Uterus (tissue), 4 donors: ENCODE measurements at regions of chr6 and their contacts with region 1.

Region 1: DNA sequence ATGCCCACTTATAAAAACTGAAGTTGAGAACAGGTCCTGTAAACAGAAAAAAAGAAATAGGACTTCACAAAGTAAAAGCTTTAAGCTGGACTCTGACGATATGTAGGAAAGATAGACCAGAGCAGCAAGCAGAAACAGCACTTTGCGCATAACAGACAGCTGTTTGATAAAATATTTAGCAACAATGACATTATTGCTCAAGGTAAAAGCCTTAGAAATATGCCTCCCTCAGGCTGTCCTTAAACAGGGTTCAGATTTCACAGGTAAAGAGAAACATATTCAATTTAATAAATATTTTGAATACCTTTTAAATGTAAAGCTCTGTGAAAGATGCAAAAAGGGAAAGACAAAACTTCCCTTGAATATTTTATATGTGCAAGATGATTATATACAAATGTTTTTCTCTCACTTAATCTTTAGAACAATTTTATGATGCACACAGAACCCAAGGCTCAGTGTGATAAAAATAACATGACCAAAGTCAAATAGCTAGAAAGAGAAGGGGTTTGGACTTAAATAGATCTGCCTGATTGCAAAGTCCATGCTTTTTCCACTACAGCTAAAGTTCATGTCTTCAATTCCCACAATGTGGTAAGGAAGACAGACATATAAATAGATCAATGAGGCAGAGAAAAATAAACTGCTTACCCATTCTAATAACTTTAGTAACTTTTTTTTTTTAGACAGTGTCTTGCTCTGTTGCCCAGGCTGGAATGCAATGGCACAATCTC is 144.0 kb downstream of the CDK19 start:
- DNase-seq: no peak
- H3K4me3 ChIP-seq: no peak overlapping the region
- H3K27ac ChIP-seq: no peak overlapping the region
- H3K4me1 ChIP-seq: no peaks in the 10 kb centered on the region
- H3K27me3 ChIP-seq: no peaks in the 10 kb centered on the region
- CTCF ChIP-seq: no peak
- POLR2A ChIP-seq: no peak

Region 2: GRCh38 chr6:110859335-110859792 is 188.1 kb after region 1 on chr6:
- intact Hi-C with region 1: no loop called
- DNase-seq: no peak
- H3K4me3 ChIP-seq: no peak overlapping the region
- H3K27ac ChIP-seq: no peak overlapping the region
- H3K4me1 ChIP-seq: no peaks in the 10 kb centered on the region
- H3K27me3 ChIP-seq: no peaks in the 10 kb centered on the region
- CTCF ChIP-seq: no peak
- POLR2A ChIP-seq: no peak

Region 3: DNA sequence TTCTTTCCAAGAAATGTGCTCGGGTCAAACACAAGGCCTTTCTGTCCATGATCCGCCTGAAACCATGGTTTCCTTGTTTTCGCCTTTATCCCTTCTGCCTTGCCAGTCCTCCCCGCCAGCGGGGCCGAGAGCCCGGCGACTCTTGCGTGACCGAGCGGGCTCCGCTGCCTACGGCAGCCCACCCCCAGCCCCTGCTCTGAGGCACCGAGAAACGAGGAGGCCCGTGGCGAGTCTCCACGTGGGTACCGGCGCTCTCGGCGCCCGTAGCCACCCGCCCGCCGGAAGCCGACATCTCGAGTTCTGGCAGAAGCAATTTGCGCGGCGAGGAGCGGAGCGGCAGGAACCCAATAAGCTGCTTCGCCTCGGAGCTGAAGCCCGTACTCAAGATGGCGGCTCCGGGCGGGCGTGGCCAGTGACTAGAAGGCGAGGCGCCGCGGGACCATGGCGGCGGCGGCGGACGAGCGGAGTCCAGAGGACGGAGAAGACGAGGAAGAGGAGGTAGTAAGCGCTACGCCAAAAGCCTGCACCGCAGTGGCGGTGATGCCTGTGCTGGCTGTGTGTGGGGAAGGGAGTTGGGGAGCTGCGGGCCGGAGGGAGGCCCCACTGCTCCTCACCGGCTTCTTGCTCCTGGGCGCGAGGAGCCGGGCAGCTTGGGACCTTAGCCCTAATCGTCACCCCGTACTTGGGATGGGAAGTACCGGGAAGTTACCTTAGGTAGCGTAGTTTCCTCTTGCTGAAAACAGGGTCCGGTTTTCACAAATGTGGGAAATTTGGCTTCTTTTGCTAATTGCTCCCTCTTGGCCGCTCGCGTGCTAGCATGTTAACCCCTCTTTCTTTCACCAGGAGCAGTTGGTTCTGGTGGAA is 287.3 kb after region 1 on chr6 and contains the start of gene GTF3C6:
- intact Hi-C with region 1: loop called (anchors 10 kb)
- DNase-seq: peak; percentile 88 to 89
- H3K4me3 ChIP-seq: peak within 1 kb of the TSS; percentile 58 to 61
- H3K27ac ChIP-seq: peak within 1 kb of the TSS; percentile 79 to 85
- H3K4me1 ChIP-seq: no peaks in the 10 kb centered on the region
- H3K27me3 ChIP-seq: no peaks in the 10 kb centered on the region
- CTCF ChIP-seq: peak in 1 of 4 experiments; percentile 5
- POLR2A ChIP-seq: peak; percentile 44 to 66
- total RNA-seq, gene GTF3C6: 3.8 to 43.4 (median 28.5) TPM